CD8-positive, alpha-beta memory T cell (primary cell): ENCODE measurements at regions of chr1 and their contacts with region 1.

Region 1: GRCh38 chr1:111030590-111030989 is 66.9 kb upstream of the LRIF1 start:
- DNase-seq: peak; percentile 8 to 61 (median 32)
- H3K4me3 ChIP-seq: no peak overlapping the region
- H3K4me3 Mint-ChIP-seq: no peak overlapping the region
- H3K27ac ChIP-seq: no peak overlapping the region
- H3K27ac Mint-ChIP-seq: no peak overlapping the region
- H3K4me1 ChIP-seq: no peaks in the 10 kb centered on the region
- H3K4me1 Mint-ChIP-seq: no peaks in the 10 kb centered on the region
- H3K27me3 ChIP-seq: no peaks in the 10 kb centered on the region
- H3K27me3 Mint-ChIP-seq: peaks cover 8 to 21% of the 10 kb centered on the region in 2 donors

Region 2: DNA sequence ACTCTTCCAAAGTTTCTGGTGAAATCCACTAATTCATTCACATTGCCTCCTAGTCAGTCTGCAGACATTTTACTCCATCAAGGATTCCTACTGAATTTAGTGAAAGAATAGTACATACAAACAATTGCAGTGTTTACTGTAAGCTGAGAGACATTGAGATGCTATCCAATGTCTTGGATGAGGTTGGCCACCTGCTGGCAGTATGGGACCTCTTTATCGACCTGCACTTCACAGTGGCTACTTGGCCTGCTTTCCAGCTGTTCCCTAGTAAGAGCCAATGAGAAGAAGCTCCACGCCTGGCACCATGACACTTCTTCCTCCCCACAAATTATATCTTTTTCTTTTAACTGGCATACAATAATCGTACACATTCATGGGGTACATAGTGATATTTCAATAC is 15.4 kb before region 1 on chr1:
- CTCF ChIA-PET with region 1: interaction called, 10 read pairs
- POLR2A ChIA-PET with region 1: no interaction called
- DNase-seq: no peak
- H3K4me3 ChIP-seq: no peak overlapping the region
- H3K4me3 Mint-ChIP-seq: no peak overlapping the region
- H3K27ac ChIP-seq: no peak overlapping the region
- H3K27ac Mint-ChIP-seq: no peak overlapping the region
- H3K4me1 ChIP-seq: no peaks in the 10 kb centered on the region
- H3K4me1 Mint-ChIP-seq: no peaks in the 10 kb centered on the region
- H3K27me3 ChIP-seq: peaks cover 9% of the 10 kb centered on the region
- H3K27me3 Mint-ChIP-seq: peaks cover 32 to 57% of the 10 kb centered on the region in 2 donors

Region 3: DNA sequence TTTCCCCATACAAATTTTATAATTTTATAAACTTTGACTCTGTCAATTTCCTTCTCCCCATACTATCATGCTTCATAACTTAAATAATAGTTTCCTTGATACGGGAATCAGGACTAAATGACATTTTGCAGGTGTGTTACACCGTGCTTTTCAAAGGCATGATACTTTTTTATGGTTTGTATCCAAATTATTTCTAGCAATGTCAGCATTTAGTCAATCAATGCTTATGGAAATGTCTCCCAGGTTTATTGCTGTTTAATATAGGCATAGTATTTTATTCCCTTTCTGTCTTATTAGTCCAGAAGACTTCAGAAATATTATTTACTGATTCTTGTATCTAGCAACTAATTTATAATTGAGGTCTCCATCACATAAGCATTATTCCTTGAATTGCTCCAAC is 85.9 kb after region 1 on chr1:
- CTCF ChIA-PET with region 1: no interaction called
- POLR2A ChIA-PET with region 1: no interaction called
- DNase-seq: no peak
- H3K4me3 ChIP-seq: no peak overlapping the region
- H3K4me3 Mint-ChIP-seq: no peak overlapping the region
- H3K27ac ChIP-seq: no peak overlapping the region
- H3K27ac Mint-ChIP-seq: no peak overlapping the region
- H3K4me1 ChIP-seq: no peaks in the 10 kb centered on the region
- H3K4me1 Mint-ChIP-seq: no peaks in the 10 kb centered on the region
- H3K27me3 ChIP-seq: no peaks in the 10 kb centered on the region
- H3K27me3 Mint-ChIP-seq: no peaks in the 10 kb centered on the region

Region 4: GRCh38 chr1:111161843-111162487 is 131.4 kb after region 1 on chr1:
- CTCF ChIA-PET with region 1: no interaction called
- POLR2A ChIA-PET with region 1: no interaction called
- DNase-seq: no peak
- H3K4me3 ChIP-seq: no peak overlapping the region
- H3K4me3 Mint-ChIP-seq: no peak overlapping the region
- H3K27ac ChIP-seq: no peak overlapping the region
- H3K27ac Mint-ChIP-seq: peak overlapping the region in 5 of 8 donors; percentile 36 to 77 (median 50)
- H3K4me1 ChIP-seq: no peaks in the 10 kb centered on the region
- H3K4me1 Mint-ChIP-seq: peaks cover 9 to 25% (median 23%) of the 10 kb centered on the region in 3 donors
- H3K27me3 ChIP-seq: no peaks in the 10 kb centered on the region
- H3K27me3 Mint-ChIP-seq: no peaks in the 10 kb centered on the region

Region 5: GRCh38 chr1:111214074-111214801 is 183.6 kb after region 1 on chr1:
- CTCF ChIA-PET with region 1: no interaction called
- POLR2A ChIA-PET with region 1: no interaction called
- DNase-seq: no peak
- H3K4me3 ChIP-seq: peak overlapping the region; percentile 46
- H3K4me3 Mint-ChIP-seq: peak overlapping the region; percentile 63 to 77 (median 70)
- H3K27ac ChIP-seq: no peak overlapping the region
- H3K27ac Mint-ChIP-seq: peak overlapping the region; percentile 95 to 99 (median 97)
- H3K4me1 ChIP-seq: peaks cover 67% of the 10 kb centered on the region
- H3K4me1 Mint-ChIP-seq: peaks cover 66 to 86% (median 79%) of the 10 kb centered on the region in 3 donors
- H3K27me3 ChIP-seq: no peaks in the 10 kb centered on the region
- H3K27me3 Mint-ChIP-seq: peaks cover 0 to 4% of the 10 kb centered on the region in 2 donors

Region 6: GRCh38 chr1:111334169-111334568 is 303.6 kb after region 1 on chr1:
- CTCF ChIA-PET with region 1: interaction called, 16 read pairs
- POLR2A ChIA-PET with region 1: no interaction called
- DNase-seq: peak; percentile 6 to 73 (median 49)
- H3K4me3 ChIP-seq: no peak overlapping the region
- H3K4me3 Mint-ChIP-seq: peak overlapping the region in 1 of 7 donors; percentile 4
- H3K27ac ChIP-seq: no peak overlapping the region
- H3K27ac Mint-ChIP-seq: peak overlapping the region in 6 of 8 donors; percentile 2 to 80 (median 74)
- H3K4me1 ChIP-seq: peaks cover 4% of the 10 kb centered on the region
- H3K4me1 Mint-ChIP-seq: peaks cover 4 to 14% (median 5%) of the 10 kb centered on the region in 3 donors
- H3K27me3 ChIP-seq: no peaks in the 10 kb centered on the region
- H3K27me3 Mint-ChIP-seq: peaks cover 2 to 3% of the 10 kb centered on the region in 2 donors

Region 7: DNA sequence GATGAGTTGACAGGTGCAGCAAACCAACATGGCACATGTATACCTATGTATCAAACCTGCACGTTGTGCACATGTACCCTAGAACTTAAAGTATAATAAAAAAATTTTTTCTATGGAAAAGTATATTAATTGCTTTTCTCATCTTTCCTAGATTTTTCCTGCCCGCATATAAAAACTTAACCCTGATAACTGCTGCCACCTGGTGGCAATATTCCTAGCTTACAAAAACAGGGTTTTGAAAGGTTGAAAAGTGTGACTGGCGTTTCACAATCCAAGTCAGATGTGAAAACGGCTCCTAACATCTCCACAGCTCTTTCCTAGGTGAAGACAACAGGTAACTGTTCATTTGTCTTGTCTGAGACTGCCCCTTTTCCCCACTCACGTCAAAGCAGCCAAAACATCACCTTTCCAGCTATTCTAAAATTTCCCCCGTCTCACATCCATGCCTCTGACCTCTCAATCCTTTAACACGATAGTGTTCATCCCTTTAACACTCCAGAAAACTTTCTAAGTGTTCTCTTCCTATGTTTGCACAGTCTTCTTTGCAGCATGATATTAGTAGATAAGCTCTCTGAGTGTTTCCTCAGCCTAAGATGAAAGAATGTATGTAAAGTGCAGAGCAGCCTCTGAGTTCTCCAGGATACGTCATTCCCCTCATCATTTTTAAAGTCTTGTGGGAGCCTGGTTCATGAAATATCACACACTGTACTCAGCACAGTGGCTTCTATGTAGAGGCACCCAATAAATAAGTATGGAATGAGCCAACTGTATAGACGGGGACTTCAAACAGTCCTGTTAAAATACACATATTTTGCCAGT is 369.4 kb after region 1 on chr1:
- CTCF ChIA-PET with region 1: interaction called, 12 read pairs
- POLR2A ChIA-PET with region 1: no interaction called
- DNase-seq: peak in 4 of 5 donors; percentile 15 to 37 (median 26)
- H3K4me3 ChIP-seq: no peak overlapping the region
- H3K4me3 Mint-ChIP-seq: no peak overlapping the region
- H3K27ac ChIP-seq: no peak overlapping the region
- H3K27ac Mint-ChIP-seq: no peak overlapping the region
- H3K4me1 ChIP-seq: no peaks in the 10 kb centered on the region
- H3K4me1 Mint-ChIP-seq: peaks cover 9 to 26% (median 10%) of the 10 kb centered on the region in 3 donors
- H3K27me3 ChIP-seq: no peaks in the 10 kb centered on the region
- H3K27me3 Mint-ChIP-seq: peaks cover 2 to 10% of the 10 kb centered on the region in 2 donors